Activated B cell treated with CpG ODN at 0.5 μM for 24 hours (primary cell): ENCODE measurements at regions of chr18 and their contacts with region 1.

Region 1: DNA sequence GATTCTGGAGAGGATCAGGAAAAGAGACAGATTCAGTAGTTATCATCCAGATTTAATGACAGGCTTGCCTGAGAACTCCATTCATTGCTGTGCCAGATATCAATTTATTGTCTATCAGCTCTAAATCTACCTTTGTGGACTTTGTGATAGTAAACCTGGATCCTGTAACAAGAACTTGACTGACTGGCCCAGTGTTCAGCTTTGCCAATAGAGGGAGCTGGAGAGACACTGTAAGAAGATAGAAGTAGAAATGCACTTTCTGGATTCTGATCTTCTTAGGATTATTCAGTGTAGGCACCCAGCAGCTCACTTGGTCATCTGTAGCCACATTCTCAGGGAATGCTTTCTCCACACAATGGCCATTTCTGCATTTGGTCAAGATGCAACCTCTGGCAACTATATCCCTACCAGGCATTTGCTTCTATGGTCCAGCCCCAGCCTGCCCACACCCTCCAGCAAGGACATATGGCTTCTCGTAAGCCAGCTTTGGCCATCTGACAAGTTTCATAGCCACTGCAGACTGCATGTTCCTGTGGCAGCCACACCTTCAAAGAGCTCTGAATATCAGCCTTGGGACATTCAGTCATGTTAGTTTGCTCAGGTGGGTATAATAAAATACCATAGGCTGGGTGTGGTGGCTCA is 6.1 kb upstream of the SERPINB8 start:
- DNase-seq: no peak
- ATAC-seq: peak; percentile 83
- H3K4me3 Mint-ChIP-seq: no peak overlapping the region
- H3K27ac Mint-ChIP-seq: no peak overlapping the region
- H3K4me1 Mint-ChIP-seq: no peaks in the 10 kb centered on the region
- H3K27me3 Mint-ChIP-seq: peaks cover 13% of the 10 kb centered on the region
- CTCF ChIP-seq: no peak

Region 2: DNA sequence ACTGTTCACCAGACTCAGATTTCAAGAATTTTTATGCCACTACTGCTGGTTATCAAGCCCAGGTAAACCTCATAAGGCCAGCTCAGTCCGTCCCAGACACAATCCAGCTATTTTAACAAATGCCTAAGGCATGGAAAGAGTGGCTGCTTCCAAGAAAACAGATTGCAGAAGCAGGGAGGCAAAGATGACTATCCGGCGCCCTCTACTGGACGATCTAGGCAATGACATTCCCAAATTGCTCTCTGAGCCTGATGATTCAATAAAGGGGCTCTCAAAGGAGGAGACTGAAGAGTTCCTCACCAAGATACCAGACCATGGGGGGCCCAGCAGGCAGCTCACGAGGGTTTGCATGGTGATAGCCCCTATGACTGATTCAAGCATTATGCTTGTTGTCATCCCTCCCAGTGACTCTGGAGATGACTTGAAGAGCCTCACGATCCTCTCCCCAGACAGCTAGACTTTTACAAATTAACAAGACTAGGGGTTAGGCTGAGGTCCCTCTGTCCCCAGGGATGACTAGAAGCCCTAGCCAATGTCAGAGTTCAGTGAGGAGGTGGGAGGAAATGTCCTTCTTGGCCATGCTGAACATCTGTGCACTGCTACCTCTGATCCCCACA is 31.2 kb after region 1 on chr18:
- CTCF ChIA-PET with region 1: interaction called, 16 read pairs
- POLR2A ChIA-PET with region 1: no interaction called
- intact Hi-C with region 1: loop called (anchors 1 kb)
- DNase-seq: no peak
- ATAC-seq: peak; percentile 37
- H3K4me3 Mint-ChIP-seq: no peak overlapping the region
- H3K27ac Mint-ChIP-seq: no peak overlapping the region
- H3K4me1 Mint-ChIP-seq: no peaks in the 10 kb centered on the region
- H3K27me3 Mint-ChIP-seq: no peaks in the 10 kb centered on the region
- CTCF ChIP-seq: peak; percentile 19

Region 3: GRCh38 chr18:64100116-64100922 is 136.6 kb after region 1 on chr18:
- CTCF ChIA-PET with region 1: no interaction called
- POLR2A ChIA-PET with region 1: no interaction called
- intact Hi-C with region 1: no loop called
- DNase-seq: no peak
- ATAC-seq: no peak
- H3K4me3 Mint-ChIP-seq: no peak overlapping the region
- H3K27ac Mint-ChIP-seq: no peak overlapping the region
- H3K4me1 Mint-ChIP-seq: peaks cover 3% of the 10 kb centered on the region
- H3K27me3 Mint-ChIP-seq: peaks cover 2% of the 10 kb centered on the region
- CTCF ChIP-seq: no peak